ENCODE measurements at regions of chr12 and their contacts with region 1.

Region 1: GRCh38 chr12:15532364-15532977 is 210.2 kb downstream of the PTPRO start:
- DNase-seq: peak; percentile 74
- H3K4me3 Mint-ChIP-seq: no peak overlapping the region
- H3K27ac Mint-ChIP-seq: no peak overlapping the region
- H3K4me1 Mint-ChIP-seq: peaks cover 14% of the 10 kb centered on the region
- H3K27me3 Mint-ChIP-seq: no peaks in the 10 kb centered on the region
- CTCF ChIP-seq: peak; percentile 63

Region 2: DNA sequence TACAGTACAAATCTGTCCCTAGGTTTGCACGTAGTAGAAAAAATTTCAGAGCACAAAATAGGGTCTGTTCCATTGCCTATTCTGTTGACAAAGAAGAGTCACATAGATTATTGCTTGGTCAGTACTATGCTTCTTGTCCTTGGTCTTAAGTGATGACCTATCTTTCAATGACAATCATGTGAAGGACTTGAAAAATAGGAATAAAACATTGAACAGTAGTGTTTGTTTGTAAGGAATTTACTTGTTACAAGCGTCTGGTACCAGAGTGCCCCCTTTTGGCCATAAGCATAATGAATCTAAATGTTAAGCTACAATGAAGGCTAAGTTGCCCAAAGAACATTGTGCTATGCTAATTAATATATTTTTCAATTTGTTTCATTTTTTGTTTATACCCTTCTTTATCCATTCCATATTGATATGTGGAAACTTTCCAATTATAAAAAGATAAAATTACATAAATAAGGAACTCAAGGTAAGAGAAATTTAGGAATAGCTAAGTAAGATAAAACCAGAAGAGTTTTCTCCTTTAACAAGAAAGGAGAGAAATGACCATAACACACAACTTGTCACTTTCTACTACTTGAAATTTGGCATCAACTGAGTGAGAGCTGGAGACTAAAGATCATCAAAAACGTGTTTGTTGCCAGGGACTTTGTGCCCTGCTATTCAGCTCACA is 52.0 kb after region 1 on chr12:
- CTCF ChIA-PET with region 1: interaction called, 55 read pairs
- intact Hi-C with region 1: loop called (anchors 1 kb)
- DNase-seq: peak; percentile 19
- H3K4me3 Mint-ChIP-seq: no peak overlapping the region
- H3K27ac Mint-ChIP-seq: no peak overlapping the region
- H3K4me1 Mint-ChIP-seq: no peaks in the 10 kb centered on the region
- H3K27me3 Mint-ChIP-seq: no peaks in the 10 kb centered on the region
- CTCF ChIP-seq: peak; percentile 21

Region 3: GRCh38 chr12:15772405-15773018 is 240.0 kb after region 1 on chr12:
- CTCF ChIA-PET with region 1: no interaction called
- intact Hi-C with region 1: loop called (anchors 2 kb)
- DNase-seq: no peak
- H3K4me3 Mint-ChIP-seq: no peak overlapping the region
- H3K27ac Mint-ChIP-seq: peak overlapping the region; percentile 86
- H3K4me1 Mint-ChIP-seq: peaks cover 59% of the 10 kb centered on the region
- H3K27me3 Mint-ChIP-seq: no peaks in the 10 kb centered on the region
- CTCF ChIP-seq: peak; percentile 15

Region 4: GRCh38 chr12:15899282-15899870 is 366.9 kb after region 1 on chr12:
- CTCF ChIA-PET with region 1: interaction called, 4 read pairs
- intact Hi-C with region 1: loop called (anchors 5 kb)
- DNase-seq: no peak
- H3K4me3 Mint-ChIP-seq: no peak overlapping the region
- H3K27ac Mint-ChIP-seq: no peak overlapping the region
- H3K4me1 Mint-ChIP-seq: no peaks in the 10 kb centered on the region
- H3K27me3 Mint-ChIP-seq: no peaks in the 10 kb centered on the region
- CTCF ChIP-seq: peak; percentile 55